ENCODE measurements at regions of chr17 and their contacts with region 1.

Region 1: DNA sequence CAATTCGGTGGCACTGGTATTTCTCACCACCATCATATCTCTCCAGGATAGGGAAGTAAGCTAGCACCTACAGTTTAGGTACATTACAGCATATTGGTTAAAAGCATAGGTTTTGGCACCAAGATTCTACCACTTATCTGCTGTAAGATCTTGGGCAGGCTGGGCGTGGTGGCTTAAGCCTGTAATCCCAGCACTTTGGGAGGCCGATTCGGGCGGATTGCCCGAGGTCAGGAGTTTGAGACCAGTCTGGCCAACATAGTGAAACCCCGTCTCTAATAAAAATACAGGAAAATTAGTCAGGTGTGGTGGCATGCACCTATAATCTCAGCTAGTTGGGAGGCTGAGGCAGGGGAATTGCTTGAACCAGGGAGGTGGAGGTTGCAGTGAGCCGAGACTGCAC is 51.4 kb downstream of the GPATCH8 start:
- DNase-seq: no peak
- ATAC-seq: no peak
- H3K4me3 ChIP-seq: no peak overlapping the region
- H3K27ac ChIP-seq: no peak overlapping the region
- H3K4me1 ChIP-seq: no peaks in the 10 kb centered on the region
- H3K27me3 ChIP-seq: no peaks in the 10 kb centered on the region
- CTCF ChIP-seq: no peak

Region 2: DNA sequence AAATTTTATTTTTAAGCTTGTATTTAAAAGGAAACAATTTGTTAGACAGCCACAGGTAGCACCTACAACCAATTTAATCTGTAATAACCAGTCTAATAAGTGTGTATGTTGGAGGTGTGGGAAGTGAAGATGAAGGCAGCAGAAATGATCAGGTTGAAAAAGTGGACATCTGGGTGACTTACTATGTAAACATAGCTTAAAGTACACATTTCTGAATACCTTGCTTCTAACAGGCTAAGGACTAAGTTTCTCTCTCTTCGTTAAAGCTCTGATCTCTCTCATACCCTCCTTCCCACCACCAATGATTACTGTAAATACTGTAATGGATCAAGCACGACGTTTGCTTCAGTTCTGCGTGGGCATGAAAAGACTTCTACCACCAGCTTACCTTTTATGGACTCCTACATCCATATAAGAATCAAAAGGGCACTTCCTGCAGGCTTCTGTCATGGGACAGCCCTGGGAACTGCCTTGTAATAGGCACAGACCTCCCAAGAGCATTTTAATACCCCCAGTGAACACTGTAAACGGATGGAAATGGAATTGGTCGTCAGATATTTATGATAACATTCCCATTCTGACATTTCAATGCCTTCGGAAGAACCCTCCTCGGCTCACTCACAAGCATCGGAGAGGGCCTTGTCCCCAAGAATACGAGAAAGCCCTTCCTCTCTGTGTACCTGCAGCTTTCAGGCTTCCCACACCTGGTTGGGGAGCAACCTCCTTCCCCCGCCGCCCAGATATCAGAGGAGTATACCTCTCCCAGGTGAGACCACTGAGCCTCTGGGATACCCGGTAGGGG is 237.0 kb after region 1 on chr17:
- CTCF ChIA-PET with region 1: no interaction called
- POLR2A ChIA-PET with region 1: interaction called, 10 read pairs
- in situ Hi-C with region 1: no loop called
- intact Hi-C with region 1: no loop called
- DNase-seq: no peak
- ATAC-seq: peak; percentile 39; the same call in 1 of the 2 replicates
- H3K4me3 ChIP-seq: peak overlapping the region; percentile 86 to 96
- H3K27ac ChIP-seq: peak overlapping the region; percentile 88
- H3K4me1 ChIP-seq: 0 out of 2 replicates have a peak, but pooled peaks cover 7% of the 10 kb centered on the region
- H3K27me3 ChIP-seq: no peaks in the 10 kb centered on the region
- CTCF ChIP-seq: no peak

Measured in Panc1 (cell line).